ENCODE measurements at regions of chr1 and their contacts with region 1.

Region 1: GRCh38 chr1:150259758-150260669 is 2.4 kb downstream of the CA14 start:
- DNase-seq: peak in 2 of 4 experiments; percentile 66 to 75
- ATAC-seq: peak; percentile 79
- H3K4me3 ChIP-seq: no peak overlapping the region
- H3K27ac ChIP-seq: 0 out of 3 replicates have a peak overlapping the region, but pooled peaks have one; percentile 3
- H3K4me1 ChIP-seq: peaks cover 23 to 26% of the 10 kb centered on the region in 2 experiments
- H3K27me3 ChIP-seq: peaks cover 0 to 4% of the 10 kb centered on the region in 2 experiments; a peak in 2 of 5 replicates
- CTCF ChIP-seq: no peak
- EP300 ChIP-seq: no peak
- POLR2A ChIP-seq: no peak
- RAD21 ChIP-seq: no peak

Region 2: DNA sequence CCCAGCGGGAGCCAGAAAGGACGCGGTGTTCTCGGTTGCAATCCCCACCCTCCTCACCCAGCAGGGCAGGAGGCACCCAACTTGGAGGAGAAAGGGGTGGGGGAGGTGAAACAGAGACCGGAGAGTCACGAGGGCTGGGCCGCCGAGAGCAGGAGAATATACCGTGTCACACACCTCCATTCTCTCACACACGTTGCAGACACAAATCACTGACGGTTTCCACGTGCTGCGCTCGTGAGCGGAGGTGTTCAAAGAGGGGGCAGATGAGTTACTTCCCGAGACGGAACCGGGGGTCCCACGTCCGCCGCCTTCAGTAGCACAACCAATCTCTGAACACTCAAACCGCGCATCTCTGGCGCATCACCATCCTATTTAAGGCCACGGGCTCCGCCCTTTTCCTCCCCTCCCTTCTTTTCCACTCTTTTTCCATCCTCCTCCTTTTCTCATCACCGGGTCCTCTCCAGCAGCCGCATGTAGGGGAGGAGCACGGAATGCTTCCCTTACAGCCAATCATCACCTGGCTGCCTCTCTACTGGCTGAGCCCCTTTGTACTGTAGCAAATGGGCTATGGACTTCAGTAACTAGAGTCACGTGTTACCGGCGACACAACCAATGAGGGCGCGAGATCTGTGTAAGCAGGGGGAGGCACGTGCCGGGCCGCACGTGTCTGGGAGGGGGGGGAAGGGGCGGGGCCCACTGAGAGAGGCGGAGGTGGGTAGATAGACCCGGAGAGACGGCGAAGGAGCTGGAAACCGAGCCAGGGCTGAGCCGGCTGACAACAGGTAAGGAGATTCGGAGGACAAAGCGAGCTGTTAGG is 22.0 kb after region 1 on chr1 and contains the start of gene CIART:
- CTCF ChIA-PET with region 1: interaction called, 43 read pairs
- POLR2A ChIA-PET with region 1: interaction called, 5 read pairs
- in situ Hi-C with region 1: no loop called
- intact Hi-C with region 1: loop called (anchors 1 kb)
- DNase-seq: peak in 2 of 4 experiments; percentile 36 to 52
- ATAC-seq: peak; percentile 60
- H3K4me3 ChIP-seq: no peak within 1 kb of the TSS
- H3K27ac ChIP-seq: peak within 1 kb of the TSS; percentile 39; the same call in 2 of the 3 replicates
- H3K4me1 ChIP-seq: peaks cover 0 to 14% of the 10 kb centered on the region in 2 experiments; a peak in 3 of 5 replicates
- H3K27me3 ChIP-seq: no peaks in the 10 kb centered on the region
- CTCF ChIP-seq: no peak
- EP300 ChIP-seq: no peak
- POLR2A ChIP-seq: no peak
- RAD21 ChIP-seq: no peak
- polyA plus RNA-seq, gene CIART: 0.07 to 0.21 TPM

Region 3: GRCh38 chr1:150321826-150322166 is 61.8 kb after region 1 on chr1:
- CTCF ChIA-PET with region 1: interaction called, 3 read pairs
- POLR2A ChIA-PET with region 1: no interaction called
- in situ Hi-C with region 1: no loop called
- intact Hi-C with region 1: loop called (anchors 5 kb)
- DNase-seq: no peak
- ATAC-seq: peak; percentile 13
- H3K4me3 ChIP-seq: peak overlapping the region; percentile 92
- H3K27ac ChIP-seq: peak overlapping the region; percentile 91
- H3K4me1 ChIP-seq: peaks cover 5% of the 10 kb centered on the region in 2 experiments; a peak in 2 of 5 replicates
- H3K27me3 ChIP-seq: no peaks in the 10 kb centered on the region
- CTCF ChIP-seq: no peak
- EP300 ChIP-seq: no peak
- POLR2A ChIP-seq: no peak
- RAD21 ChIP-seq: no peak

Region 4: DNA sequence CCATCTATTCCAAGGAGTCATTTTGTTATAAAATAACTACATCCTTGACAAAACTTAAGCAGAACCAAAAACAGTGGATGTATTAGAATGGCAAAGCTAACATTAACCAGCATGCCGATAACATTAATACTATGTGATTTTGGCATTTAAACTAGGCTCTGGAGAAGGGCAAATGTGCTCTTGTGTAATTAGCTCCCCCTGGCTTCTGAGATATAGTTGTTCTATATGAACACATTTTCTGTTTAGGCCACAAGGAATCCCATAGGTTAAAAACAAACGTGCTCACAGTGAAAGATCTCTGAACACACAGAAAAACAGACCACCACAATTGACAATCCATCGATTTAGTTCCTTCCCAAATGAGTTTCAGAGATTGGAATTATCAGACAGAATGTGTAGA is 169.8 kb after region 1 on chr1:
- CTCF ChIA-PET with region 1: interaction called, 6 read pairs
- POLR2A ChIA-PET with region 1: no interaction called
- in situ Hi-C with region 1: no loop called
- intact Hi-C with region 1: loop called (anchors 1 kb)
- DNase-seq: peak; percentile 14 to 40 (median 26)
- ATAC-seq: peak; percentile 74
- H3K4me3 ChIP-seq: no peak overlapping the region
- H3K27ac ChIP-seq: no peak overlapping the region
- H3K4me1 ChIP-seq: no peaks in the 10 kb centered on the region
- H3K27me3 ChIP-seq: no peaks in the 10 kb centered on the region
- CTCF ChIP-seq: peak in 2 of 3 experiments; percentile 47 to 55; a peak in 5 of 6 replicates
- EP300 ChIP-seq: no peak
- POLR2A ChIP-seq: no peak
- RAD21 ChIP-seq: peak in 1 of 2 experiments; percentile 22; a peak in 1 of 4 replicates

Region 5: DNA sequence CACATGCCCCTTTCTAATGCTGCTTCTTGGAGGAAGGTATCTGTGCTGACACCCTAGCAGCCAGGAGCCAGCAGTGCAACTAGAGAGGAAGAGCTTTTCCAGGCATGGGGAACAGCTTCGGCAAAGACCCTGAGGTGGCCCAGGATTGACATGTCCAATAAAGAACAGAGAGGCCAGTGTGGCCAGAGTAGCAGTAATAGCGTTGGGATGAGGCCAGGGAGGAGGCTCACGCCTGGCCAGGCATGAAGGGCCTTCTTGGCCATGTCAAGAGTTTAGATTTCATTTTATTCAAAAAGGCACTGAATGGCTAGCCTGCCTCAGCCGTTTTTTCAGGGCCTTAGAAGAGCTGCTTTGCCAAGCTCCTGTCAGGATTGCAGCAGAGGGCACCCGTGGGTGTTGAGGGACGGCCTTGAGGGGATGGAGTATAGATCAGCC is 272.9 kb after region 1 on chr1:
- CTCF ChIA-PET with region 1: interaction called, 18 read pairs
- POLR2A ChIA-PET with region 1: no interaction called
- in situ Hi-C with region 1: no loop called
- intact Hi-C with region 1: loop called (anchors 1 kb)
- DNase-seq: no peak
- ATAC-seq: no peak
- H3K4me3 ChIP-seq: no peak overlapping the region
- H3K27ac ChIP-seq: 0 out of 3 replicates have a peak overlapping the region, but pooled peaks have one; percentile 13
- H3K4me1 ChIP-seq: peaks cover 9 to 19% of the 10 kb centered on the region in 2 experiments; a peak in 4 of 5 replicates
- H3K27me3 ChIP-seq: no peaks in the 10 kb centered on the region
- CTCF ChIP-seq: no peak; a peak in 1 of 6 replicates
- EP300 ChIP-seq: no peak
- POLR2A ChIP-seq: no peak
- RAD21 ChIP-seq: no peak

Region 6: DNA sequence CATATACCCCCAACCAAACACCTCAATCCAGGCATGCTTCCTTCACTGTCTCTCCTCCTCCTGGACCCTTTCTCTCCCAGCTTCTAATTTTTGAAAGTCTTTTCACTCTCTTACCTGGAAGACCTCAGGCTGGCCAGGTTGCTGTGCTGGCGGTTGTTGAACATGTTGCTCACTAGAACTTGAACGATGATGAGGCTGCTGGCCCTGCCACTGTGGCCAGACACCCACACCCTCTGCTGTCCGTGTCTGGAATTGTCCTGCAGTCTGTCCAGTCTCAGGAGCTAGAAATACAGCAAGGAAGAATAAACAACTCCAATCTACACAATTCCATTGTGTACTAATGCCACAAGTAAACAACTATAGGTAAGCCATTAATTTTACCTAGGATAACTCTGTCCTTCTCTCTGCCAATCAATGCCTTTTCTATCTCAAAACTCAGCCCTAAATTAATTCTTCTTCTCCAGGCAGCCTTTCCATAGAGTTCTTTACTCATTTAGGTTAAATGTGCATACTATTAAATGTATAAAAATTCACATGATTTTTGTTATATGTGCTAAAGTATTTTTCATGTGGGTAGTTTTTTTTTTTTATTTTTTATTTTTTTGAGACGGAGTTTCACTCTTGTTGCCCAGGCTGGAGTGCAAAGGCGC is 553.2 kb after region 1 on chr1:
- CTCF ChIA-PET with region 1: no interaction called
- POLR2A ChIA-PET with region 1: no interaction called
- in situ Hi-C with region 1: no loop called
- intact Hi-C with region 1: loop called (anchors 10 kb)
- DNase-seq: peak; percentile 37 to 78 (median 57)
- ATAC-seq: peak; percentile 98
- H3K4me3 ChIP-seq: no peak overlapping the region
- H3K27ac ChIP-seq: no peak overlapping the region
- H3K4me1 ChIP-seq: peaks cover 0 to 8% of the 10 kb centered on the region in 2 experiments; a peak in 1 of 5 replicates
- H3K27me3 ChIP-seq: no peaks in the 10 kb centered on the region
- CTCF ChIP-seq: peak; percentile 86 to 92 (median 90)
- EP300 ChIP-seq: no peak
- POLR2A ChIP-seq: no peak
- RAD21 ChIP-seq: peak; percentile 85 to 95

Region 7: GRCh38 chr1:150995896-150996295 is 735.9 kb after region 1 on chr1:
- CTCF ChIA-PET with region 1: interaction called, 3 read pairs
- POLR2A ChIA-PET with region 1: no interaction called
- in situ Hi-C with region 1: loop called (anchors 5 kb)
- intact Hi-C with region 1: loop called (anchors 5 kb)
- DNase-seq: peak in 3 of 4 experiments; percentile 38 to 55 (median 39)
- ATAC-seq: peak; percentile 34; the same call in 1 of the 3 replicates
- H3K4me3 ChIP-seq: no peak overlapping the region
- H3K27ac ChIP-seq: no peak overlapping the region
- H3K4me1 ChIP-seq: peaks cover 27 to 33% of the 10 kb centered on the region in 2 experiments
- H3K27me3 ChIP-seq: no peaks in the 10 kb centered on the region
- CTCF ChIP-seq: peak; percentile 56 to 76 (median 73); a peak in 5 of 6 replicates
- EP300 ChIP-seq: no peak
- POLR2A ChIP-seq: no peak
- RAD21 ChIP-seq: peak; percentile 64 to 70